ENCODE measurements at regions of chrX and their contacts with region 1.

Region 1: GRCh38 chrX:40266490-40267333 is 169.0 kb upstream of the BCOR start:
- DNase-seq: peak; percentile 82
- H3K4me3 ChIP-seq: peak overlapping the region; percentile 65
- H3K27ac ChIP-seq: no peak overlapping the region
- H3K4me1 ChIP-seq: peaks cover 15% of the 10 kb centered on the region
- H3K27me3 ChIP-seq: no peaks in the 10 kb centered on the region

Region 2: DNA sequence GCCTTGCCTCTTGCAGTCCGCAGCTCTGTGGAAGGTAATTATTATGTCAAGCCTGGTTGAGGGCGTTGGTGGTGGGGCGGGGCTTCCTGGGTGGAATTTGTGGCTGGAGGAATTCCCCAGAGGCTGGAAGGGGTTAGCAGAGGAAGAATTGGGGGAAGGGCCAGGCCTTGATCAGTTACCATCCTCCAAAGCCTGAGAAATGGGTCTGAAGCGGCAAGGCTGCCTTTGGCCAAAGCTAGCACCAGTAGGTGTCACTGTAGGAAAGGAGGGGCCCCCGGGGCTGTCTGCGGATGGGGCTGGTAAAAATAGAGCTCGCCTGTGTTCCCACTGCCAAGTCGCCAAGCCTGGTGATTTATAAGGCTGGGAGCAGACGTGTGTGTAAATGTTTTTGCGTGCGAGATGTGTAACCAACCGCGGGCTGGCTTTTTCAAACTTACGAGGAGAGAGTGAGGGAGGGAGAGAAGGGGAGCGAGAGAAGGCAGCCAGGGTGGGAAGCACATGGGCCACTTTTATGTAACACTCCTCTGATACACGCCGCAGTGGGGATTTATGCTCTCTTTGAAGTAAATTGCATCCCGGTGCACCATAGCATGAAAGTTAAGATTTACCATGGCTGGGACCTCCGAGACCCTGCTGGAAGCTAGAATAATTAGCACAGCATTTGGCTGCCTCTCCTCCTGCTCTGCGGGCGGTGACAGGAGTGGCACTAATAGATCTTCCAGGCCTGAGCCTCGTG is 535.9 kb before region 1 on chrX:
- in situ Hi-C with region 1: loop called (anchors 25 kb)
- DNase-seq: peak; percentile 84
- H3K4me3 ChIP-seq: no peak overlapping the region
- H3K27ac ChIP-seq: no peak overlapping the region
- H3K4me1 ChIP-seq: peaks cover 27% of the 10 kb centered on the region
- H3K27me3 ChIP-seq: no peaks in the 10 kb centered on the region

Region 3: DNA sequence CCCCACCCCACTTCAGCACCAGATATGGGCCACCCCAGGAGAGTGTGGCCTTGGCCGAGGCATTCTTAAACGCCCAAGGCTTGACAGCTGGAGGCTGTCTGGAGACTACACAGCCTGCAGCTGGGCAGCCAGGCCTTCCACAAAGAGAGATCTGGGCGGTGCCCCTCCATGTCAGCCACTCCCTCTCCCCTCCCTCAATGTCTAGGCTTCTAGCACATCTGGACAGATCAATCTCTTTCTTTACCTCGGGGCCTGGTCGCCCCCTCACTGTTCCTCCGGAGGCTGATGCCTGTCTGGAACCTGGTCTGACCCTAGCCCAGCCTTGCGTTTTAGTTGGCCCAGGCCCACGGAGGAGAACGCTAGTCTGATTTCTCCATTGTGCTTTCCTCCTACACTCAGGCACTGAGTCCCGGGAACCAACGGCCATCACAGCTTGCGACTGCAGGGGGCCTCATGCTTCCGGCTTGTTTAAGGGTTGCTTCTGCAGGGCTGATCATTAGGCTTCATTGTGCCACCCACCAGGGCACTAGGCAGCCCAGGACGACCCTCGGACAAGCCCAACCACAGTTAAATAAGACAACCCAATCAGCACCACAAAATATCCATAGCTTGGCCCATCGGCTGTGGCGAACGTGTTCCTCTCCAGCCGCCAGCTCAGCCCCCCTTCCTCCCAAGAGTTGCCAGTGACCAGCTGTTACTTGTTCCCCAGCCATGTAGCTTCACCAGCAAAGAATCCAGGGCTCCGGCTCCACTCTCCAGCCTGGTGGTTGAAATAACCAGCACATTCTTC is 369.6 kb before region 1 on chrX:
- in situ Hi-C with region 1: no loop called
- DNase-seq: peak; percentile 81
- H3K4me3 ChIP-seq: no peak overlapping the region
- H3K27ac ChIP-seq: peak overlapping the region; percentile 37; the same call in 1 of the 2 replicates
- H3K4me1 ChIP-seq: peaks cover 18% of the 10 kb centered on the region
- H3K27me3 ChIP-seq: no peaks in the 10 kb centered on the region